ENCODE measurements at regions of chr2 and their contacts with region 1.

Region 1: GRCh38 chr2:85826990-85827878 is 61.6 kb downstream of the ST3GAL5 start:
- DNase-seq: peak; percentile 88
- ATAC-seq: peak; percentile 92

Region 2: GRCh38 chr2:86079981-86080911 is 253.0 kb after region 1 on chr2:
- intact Hi-C with region 1: loop called (anchors 1 kb)
- DNase-seq: peak; percentile 89
- ATAC-seq: peak; percentile 82